Common myeloid progenitor, CD34-positive (primary cell): ENCODE measurements at regions of chr6 and their contacts with region 1.

Region 1: GRCh38 chr6:110981202-110981600 is 637 bp upstream of the RPF2 start:
- DNase-seq: peak in 1 of 3 donors; percentile 20
- H3K4me3 ChIP-seq: peak overlapping the region; percentile 70 to 99 (median 92)
- H3K27ac ChIP-seq: peak overlapping the region; percentile 97 to 98
- H3K4me1 ChIP-seq: peaks cover 6 to 16% (median 10%) of the 10 kb centered on the region in 4 experiments
- H3K27me3 ChIP-seq: no peaks in the 10 kb centered on the region

Region 2: DNA sequence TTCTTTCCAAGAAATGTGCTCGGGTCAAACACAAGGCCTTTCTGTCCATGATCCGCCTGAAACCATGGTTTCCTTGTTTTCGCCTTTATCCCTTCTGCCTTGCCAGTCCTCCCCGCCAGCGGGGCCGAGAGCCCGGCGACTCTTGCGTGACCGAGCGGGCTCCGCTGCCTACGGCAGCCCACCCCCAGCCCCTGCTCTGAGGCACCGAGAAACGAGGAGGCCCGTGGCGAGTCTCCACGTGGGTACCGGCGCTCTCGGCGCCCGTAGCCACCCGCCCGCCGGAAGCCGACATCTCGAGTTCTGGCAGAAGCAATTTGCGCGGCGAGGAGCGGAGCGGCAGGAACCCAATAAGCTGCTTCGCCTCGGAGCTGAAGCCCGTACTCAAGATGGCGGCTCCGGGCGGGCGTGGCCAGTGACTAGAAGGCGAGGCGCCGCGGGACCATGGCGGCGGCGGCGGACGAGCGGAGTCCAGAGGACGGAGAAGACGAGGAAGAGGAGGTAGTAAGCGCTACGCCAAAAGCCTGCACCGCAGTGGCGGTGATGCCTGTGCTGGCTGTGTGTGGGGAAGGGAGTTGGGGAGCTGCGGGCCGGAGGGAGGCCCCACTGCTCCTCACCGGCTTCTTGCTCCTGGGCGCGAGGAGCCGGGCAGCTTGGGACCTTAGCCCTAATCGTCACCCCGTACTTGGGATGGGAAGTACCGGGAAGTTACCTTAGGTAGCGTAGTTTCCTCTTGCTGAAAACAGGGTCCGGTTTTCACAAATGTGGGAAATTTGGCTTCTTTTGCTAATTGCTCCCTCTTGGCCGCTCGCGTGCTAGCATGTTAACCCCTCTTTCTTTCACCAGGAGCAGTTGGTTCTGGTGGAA is 22.6 kb before region 1 on chr6 and contains the start of gene GTF3C6:
- CTCF ChIA-PET with region 1: interaction called, 3 read pairs
- POLR2A ChIA-PET with region 1: interaction called, 10 read pairs
- DNase-seq: peak; percentile 94 to 97 (median 96)
- H3K4me3 ChIP-seq: peak within 1 kb of the TSS; percentile 79 to 99 (median 92)
- H3K27ac ChIP-seq: peak within 1 kb of the TSS; percentile 92 to 97
- H3K4me1 ChIP-seq: peaks cover 5 to 7% (median 6%) of the 10 kb centered on the region in 4 experiments
- H3K27me3 ChIP-seq: no peaks in the 10 kb centered on the region

Region 3: DNA sequence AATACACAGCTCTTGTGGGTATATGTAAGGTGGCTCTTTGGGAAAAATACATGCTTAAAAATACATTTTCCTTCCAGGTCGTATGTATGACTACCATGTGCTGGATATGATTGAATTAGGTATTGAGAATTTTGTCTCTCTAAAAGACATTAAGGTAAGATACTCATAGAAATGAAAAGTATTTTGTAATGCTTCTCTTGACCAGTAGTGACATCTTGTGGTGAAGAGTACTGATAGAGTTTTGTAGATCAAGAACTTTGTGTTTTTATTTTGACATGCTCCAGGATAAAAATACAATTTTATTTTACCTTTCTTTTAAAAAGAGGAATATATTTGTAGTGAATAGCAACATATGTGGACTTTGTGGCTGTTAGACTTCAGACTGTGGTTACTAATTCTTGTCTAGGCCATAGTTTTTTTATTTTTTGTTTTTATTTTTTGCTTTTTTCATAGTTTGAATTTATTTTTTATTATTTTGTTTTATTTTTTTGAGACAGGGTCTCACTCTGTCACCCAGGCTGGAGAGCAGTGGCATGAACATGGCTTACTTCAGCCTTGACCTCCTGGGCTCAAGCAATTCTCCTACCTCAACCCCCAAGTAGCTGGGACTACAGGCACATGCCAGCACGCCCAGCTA is 18.6 kb after region 1 on chr6:
- CTCF ChIA-PET with region 1: interaction called, 14 read pairs
- POLR2A ChIA-PET with region 1: interaction called, 3 read pairs
- DNase-seq: peak; percentile 57 to 79 (median 77)
- H3K4me3 ChIP-seq: no peak overlapping the region
- H3K27ac ChIP-seq: no peak overlapping the region
- H3K4me1 ChIP-seq: no peaks in the 10 kb centered on the region
- H3K27me3 ChIP-seq: no peaks in the 10 kb centered on the region

Region 4: DNA sequence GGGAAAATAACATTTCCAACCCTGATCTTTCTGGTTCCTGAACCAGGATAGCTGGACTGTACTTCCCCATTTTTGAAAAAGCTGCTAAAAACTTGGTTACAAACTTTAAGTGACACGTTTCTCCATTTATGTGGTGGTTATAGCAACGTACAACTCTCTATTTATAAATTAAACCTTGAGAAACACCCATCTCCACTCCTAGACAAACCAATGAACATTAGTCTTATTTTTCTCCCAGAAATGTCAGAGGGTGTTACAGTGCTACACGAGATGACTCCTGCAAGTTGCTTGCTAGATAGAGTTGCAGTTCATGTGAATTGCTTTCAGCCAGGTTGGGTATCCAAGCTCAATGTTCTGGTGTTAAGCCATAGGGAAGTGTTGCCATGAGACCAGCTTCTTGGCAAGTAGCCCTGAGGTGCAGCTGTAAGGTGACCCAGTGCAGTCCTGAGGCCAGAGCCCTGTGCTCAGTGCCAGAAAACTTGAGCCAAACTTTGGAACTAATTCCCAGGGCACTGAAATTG is 553.1 kb after region 1 on chr6:
- CTCF ChIA-PET with region 1: no interaction called
- POLR2A ChIA-PET with region 1: no interaction called
- DNase-seq: peak; percentile 67 to 87 (median 80)
- H3K4me3 ChIP-seq: peak overlapping the region in 2 of 7 experiments; percentile 4 to 17
- H3K27ac ChIP-seq: peak overlapping the region; percentile 51 to 54
- H3K4me1 ChIP-seq: peaks cover 11 to 49% (median 29%) of the 10 kb centered on the region in 4 experiments
- H3K27me3 ChIP-seq: no peaks in the 10 kb centered on the region